Natural killer cell (primary cell): ENCODE measurements at regions of chr14 and their contacts with region 1.

Region 1: DNA sequence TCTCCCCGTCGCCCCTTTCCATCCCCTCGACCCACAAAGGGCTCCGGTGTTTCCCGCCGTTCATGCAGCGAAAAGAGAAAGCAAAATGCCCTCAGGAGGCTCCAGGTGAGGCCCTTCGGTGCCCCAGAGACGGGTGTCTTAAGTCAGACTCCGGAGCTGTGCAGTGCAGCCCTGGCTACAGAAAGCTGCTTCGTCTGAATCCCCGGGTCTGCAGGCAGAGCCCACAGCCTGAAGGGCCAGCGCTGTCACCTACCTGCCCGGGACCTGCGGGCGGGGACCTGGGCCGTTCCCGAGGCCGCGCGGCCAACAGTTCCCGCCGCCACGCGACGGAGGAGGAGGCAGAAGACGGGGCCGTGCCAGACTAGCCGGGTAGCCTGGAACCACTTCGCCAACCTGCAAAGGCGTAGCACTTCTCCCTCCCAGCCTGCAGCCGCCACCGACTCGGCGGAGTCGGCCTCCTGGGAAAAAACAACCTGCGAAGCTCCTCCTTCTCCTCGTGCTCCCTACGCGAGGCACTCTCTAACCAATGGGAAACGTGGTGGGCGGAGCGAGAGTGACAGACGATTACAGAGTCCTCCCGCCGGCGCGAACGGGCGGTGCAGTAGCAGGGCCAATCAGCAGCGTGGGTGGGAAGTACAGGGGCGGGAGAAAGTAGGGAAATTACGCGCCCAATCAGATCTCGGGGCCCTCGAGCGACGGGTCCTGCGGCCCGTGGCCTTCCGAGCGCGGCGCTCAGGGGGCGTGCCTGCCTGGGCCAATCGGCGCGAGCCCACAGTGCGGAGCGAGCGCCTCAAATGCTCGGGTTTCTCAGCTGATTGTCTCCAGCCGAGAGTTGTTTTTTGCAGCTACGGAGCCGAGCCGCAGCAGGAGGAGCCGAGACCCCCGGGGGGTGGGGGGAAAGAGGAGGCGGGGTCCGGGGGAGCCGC is at the starts of genes GPR137C and TXNDC16:
- DNase-seq: peak; percentile 97 to 100
- ATAC-seq: peak; percentile 85 to 96 (median 88)
- H3K4me3 ChIP-seq: peak within 1 kb of the TSS; percentile 84
- H3K4me3 Mint-ChIP-seq: peak within 1 kb of the TSS; percentile 99
- H3K27ac ChIP-seq: peak within 1 kb of the TSS; percentile 84
- H3K27ac Mint-ChIP-seq: peak within 1 kb of the TSS; percentile 93 to 98
- H3K4me1 ChIP-seq: peaks cover 14% of the 10 kb centered on the region
- H3K4me1 Mint-ChIP-seq: peaks cover 33 to 41% of the 10 kb centered on the region in 2 donors
- H3K27me3 ChIP-seq: peaks cover 2% of the 10 kb centered on the region
- H3K27me3 Mint-ChIP-seq: peaks cover 0 to 16% of the 10 kb centered on the region in 2 donors
- CTCF ChIP-seq: no peak
- total RNA-seq, gene GPR137C: 0.42 to 1.4 (median 0.57) TPM
- total RNA-seq, gene TXNDC16: 16.5 to 22.0 (median 20.7) TPM

Region 2: DNA sequence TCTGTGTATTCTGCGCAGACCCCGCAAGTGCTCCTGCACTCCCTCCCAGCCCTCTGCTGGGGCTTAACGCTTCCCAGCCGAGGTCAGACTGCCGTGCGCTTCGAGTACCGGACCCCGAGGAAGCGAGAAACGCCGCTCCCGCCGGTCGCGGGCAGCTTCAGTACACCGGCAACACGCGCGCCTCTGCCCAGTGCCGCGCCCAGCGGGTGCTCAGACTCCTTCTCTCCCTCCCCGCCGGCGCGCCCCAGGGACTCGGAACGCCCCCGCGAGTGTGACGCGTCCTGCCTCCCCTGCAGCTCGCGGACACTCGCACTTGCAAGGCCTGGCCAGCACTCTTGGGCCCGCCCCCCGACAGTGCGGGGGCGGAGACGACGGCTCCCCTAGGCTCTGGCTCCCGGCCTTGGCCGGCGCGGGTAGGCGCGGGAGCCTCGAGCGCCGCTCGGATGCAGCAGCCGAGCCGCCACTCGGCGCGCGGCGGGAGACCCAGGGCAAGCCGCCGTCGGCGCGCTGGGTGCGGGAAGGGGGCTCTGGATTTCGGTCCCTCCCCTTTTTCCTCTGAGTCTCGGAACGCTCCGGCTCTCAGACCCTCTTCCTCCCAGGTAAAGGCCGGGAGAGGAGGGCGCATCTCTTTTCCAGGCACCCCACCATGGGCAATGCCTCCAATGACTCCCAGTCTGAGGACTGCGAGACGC is 238.3 kb before region 1 on chr14 and contains the start of gene PTGER2:
- intact Hi-C with region 1: loop called (anchors 5 kb)
- DNase-seq: peak; percentile 79 to 81
- ATAC-seq: peak; percentile 75 to 85 (median 78)
- H3K4me3 ChIP-seq: peak within 1 kb of the TSS; percentile 86
- H3K4me3 Mint-ChIP-seq: peak within 1 kb of the TSS; percentile 98
- H3K27ac ChIP-seq: peak within 1 kb of the TSS; percentile 78
- H3K27ac Mint-ChIP-seq: peak within 1 kb of the TSS; percentile 95 to 99
- H3K4me1 ChIP-seq: peaks cover 44% of the 10 kb centered on the region
- H3K4me1 Mint-ChIP-seq: peaks cover 86 to 95% of the 10 kb centered on the region in 2 donors
- H3K27me3 ChIP-seq: no peaks in the 10 kb centered on the region
- H3K27me3 Mint-ChIP-seq: no peaks in the 10 kb centered on the region
- CTCF ChIP-seq: no peak
- total RNA-seq, gene PTGER2: 55.3 to 67.9 (median 60.6) TPM

Region 3: GRCh38 chr14:52325126-52325525 is 227.2 kb before region 1 on chr14:
- intact Hi-C with region 1: loop called (anchors 5 kb)
- DNase-seq: peak; percentile 37 to 63
- ATAC-seq: peak; percentile 83 to 94 (median 92)
- H3K4me3 ChIP-seq: no peak overlapping the region
- H3K4me3 Mint-ChIP-seq: peak overlapping the region; percentile 88
- H3K27ac ChIP-seq: peak overlapping the region; percentile 53
- H3K27ac Mint-ChIP-seq: peak overlapping the region; percentile 83 to 95
- H3K4me1 ChIP-seq: peaks cover 47% of the 10 kb centered on the region
- H3K4me1 Mint-ChIP-seq: peaks cover 87 to 89% of the 10 kb centered on the region in 2 donors
- H3K27me3 ChIP-seq: no peaks in the 10 kb centered on the region
- H3K27me3 Mint-ChIP-seq: no peaks in the 10 kb centered on the region
- CTCF ChIP-seq: no peak

Region 4: GRCh38 chr14:52706724-52707706 is 154.7 kb after region 1 on chr14 and contains the start of gene PSMC6:
- intact Hi-C with region 1: loop called (anchors 5 kb)
- DNase-seq: peak; percentile 85 to 96
- ATAC-seq: peak; percentile 98 to 100 (median 99)
- H3K4me3 ChIP-seq: peak within 1 kb of the TSS; percentile 75
- H3K4me3 Mint-ChIP-seq: peak within 1 kb of the TSS; percentile 97
- H3K27ac ChIP-seq: peak within 1 kb of the TSS; percentile 94
- H3K27ac Mint-ChIP-seq: peak within 1 kb of the TSS; percentile 97
- H3K4me1 ChIP-seq: peaks cover 10% of the 10 kb centered on the region
- H3K4me1 Mint-ChIP-seq: peaks cover 23 to 30% of the 10 kb centered on the region in 2 donors
- H3K27me3 ChIP-seq: no peaks in the 10 kb centered on the region
- H3K27me3 Mint-ChIP-seq: peaks cover 0 to 4% of the 10 kb centered on the region in 2 donors
- CTCF ChIP-seq: no peak
- total RNA-seq, gene PSMC6: 148 to 160 (median 159) TPM